IMR-90 (cell line): ENCODE measurements at regions of chr1 and their contacts with region 1.

Region 1: DNA sequence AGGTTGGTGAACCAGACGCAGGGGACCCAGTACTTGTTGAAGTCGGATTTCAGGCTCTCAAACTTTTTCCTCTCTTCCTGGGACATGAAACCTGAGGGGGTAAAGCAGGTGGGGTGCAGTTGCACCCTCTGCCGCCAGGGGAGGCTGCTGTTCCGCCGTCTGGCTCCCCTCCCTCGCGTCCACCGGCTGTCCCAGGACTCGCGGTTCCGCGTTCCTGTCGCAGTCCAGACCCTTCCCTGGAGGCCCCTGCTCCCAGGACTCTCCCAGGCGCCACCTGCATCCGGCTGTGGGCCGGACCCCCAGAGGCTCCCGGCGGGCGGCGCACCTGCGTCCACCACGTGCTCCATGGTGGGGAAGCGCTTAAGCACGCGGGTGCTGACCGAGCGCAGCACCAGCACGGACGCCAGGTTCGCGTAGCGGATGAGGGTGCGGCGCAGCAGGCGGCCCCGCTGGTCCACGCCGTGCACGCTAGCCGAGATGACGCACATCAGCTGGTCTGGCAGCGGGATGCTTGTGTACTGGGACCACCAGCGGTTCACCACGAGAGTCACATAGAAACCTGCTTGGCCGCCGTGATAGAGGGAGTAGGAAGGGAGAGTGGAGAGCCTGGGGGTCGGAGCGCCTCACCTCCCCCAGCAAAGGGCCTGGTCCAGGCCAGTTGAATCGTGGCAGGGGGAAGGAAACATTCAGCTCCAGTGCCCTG is 1.7 kb downstream of the BEST4 start:
- DNase-seq: peak; percentile 59
- ATAC-seq: peak; percentile 77
- H3K4me3 ChIP-seq: peak overlapping the region; percentile 36; the same call in 1 of the 2 replicates
- H3K27ac ChIP-seq: no peak overlapping the region
- H3K4me1 ChIP-seq: peaks cover 8% of the 10 kb centered on the region; the same call in 1 of the 2 replicates
- H3K27me3 ChIP-seq: peaks cover 2% of the 10 kb centered on the region; the same call in 1 of the 2 replicates
- CTCF ChIP-seq: peak; percentile 83
- POLR2A ChIP-seq: no peak
- RAD21 ChIP-seq: peak; percentile 83

Region 2: GRCh38 chr1:44631647-44632539 is 154.4 kb before region 1 on chr1:
- CTCF ChIA-PET with region 1: no interaction called
- POLR2A ChIA-PET with region 1: interaction called, 10 read pairs
- dilution Hi-C with region 1: no loop called
- in situ Hi-C with region 1: no loop called
- intact Hi-C with region 1: no loop called
- DNase-seq: peak; percentile 81
- ATAC-seq: peak; percentile 84
- H3K4me3 ChIP-seq: peak overlapping the region; percentile 93
- H3K27ac ChIP-seq: peak overlapping the region; percentile 94
- H3K4me1 ChIP-seq: peaks cover 16% of the 10 kb centered on the region
- H3K27me3 ChIP-seq: no peaks in the 10 kb centered on the region
- CTCF ChIP-seq: no peak
- POLR2A ChIP-seq: peak; percentile 86
- RAD21 ChIP-seq: no peak

Region 3: GRCh38 chr1:44970317-44970716 is 184.0 kb after region 1 on chr1:
- CTCF ChIA-PET with region 1: interaction called, 11 read pairs
- POLR2A ChIA-PET with region 1: no interaction called
- dilution Hi-C with region 1: no loop called
- in situ Hi-C with region 1: no loop called
- intact Hi-C with region 1: no loop called
- DNase-seq: peak; percentile 30
- ATAC-seq: 0 out of 2 replicates have a peak, but pooled peaks have one; percentile 44
- H3K4me3 ChIP-seq: no peak overlapping the region
- H3K27ac ChIP-seq: no peak overlapping the region
- H3K4me1 ChIP-seq: peaks cover 2% of the 10 kb centered on the region; the same call in 1 of the 2 replicates
- H3K27me3 ChIP-seq: no peaks in the 10 kb centered on the region
- CTCF ChIP-seq: no peak
- POLR2A ChIP-seq: no peak
- RAD21 ChIP-seq: no peak

Region 4: DNA sequence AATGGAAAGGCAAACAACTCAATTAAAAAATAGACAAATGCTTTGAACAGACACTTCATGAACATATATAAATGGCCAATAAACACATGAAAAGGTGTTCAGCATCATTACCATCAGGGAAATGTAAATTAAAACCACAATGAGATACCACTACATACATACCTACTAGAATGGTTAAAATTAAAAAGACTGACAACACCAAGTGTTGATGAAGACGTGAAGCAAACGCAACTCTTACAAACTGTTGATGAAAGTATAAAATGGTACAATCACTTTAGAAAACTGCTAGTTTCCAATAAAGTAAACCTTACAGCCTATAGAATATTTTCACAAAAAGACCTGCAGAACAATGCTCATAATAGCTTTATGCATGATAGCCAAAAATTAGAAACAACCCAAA is 190.0 kb after region 1 on chr1:
- CTCF ChIA-PET with region 1: no interaction called
- POLR2A ChIA-PET with region 1: interaction called, 13 read pairs
- dilution Hi-C with region 1: no loop called
- in situ Hi-C with region 1: no loop called
- intact Hi-C with region 1: no loop called
- DNase-seq: no peak
- ATAC-seq: no peak
- H3K4me3 ChIP-seq: no peak overlapping the region
- H3K27ac ChIP-seq: no peak overlapping the region
- H3K4me1 ChIP-seq: no peaks in the 10 kb centered on the region
- H3K27me3 ChIP-seq: no peaks in the 10 kb centered on the region
- CTCF ChIP-seq: no peak
- POLR2A ChIP-seq: no peak
- RAD21 ChIP-seq: no peak